ENCODE measurements at regions of chr4 and their contacts with region 1.

Region 1: GRCh38 chr4:54058171-54058570 is 6.2 kb downstream of the CHIC2 start:
- DNase-seq: no peak
- H3K4me3 Mint-ChIP-seq: peak overlapping the region; percentile 28
- H3K27ac Mint-ChIP-seq: peak overlapping the region; percentile 6
- H3K4me1 Mint-ChIP-seq: peaks cover 61% of the 10 kb centered on the region
- H3K27me3 Mint-ChIP-seq: no peaks in the 10 kb centered on the region

Region 2: DNA sequence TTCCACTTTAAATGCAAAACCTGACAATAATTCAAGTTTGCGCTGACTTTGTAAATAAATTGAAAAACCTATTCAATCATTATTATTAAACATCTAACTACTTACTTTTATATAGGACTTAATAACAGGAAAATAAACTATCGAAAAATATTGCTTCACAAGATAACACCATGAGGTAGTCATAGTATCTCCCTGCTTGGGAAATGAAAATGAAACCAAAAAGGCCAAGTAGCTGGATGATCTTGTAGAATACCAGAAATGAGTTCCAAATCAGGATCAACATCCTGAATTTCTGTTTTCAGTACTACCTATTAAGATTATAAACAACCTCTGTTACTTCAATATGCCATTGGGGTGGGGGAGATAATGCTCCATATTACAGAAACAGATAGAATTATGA is 52.7 kb before region 1 on chr4:
- intact Hi-C with region 1: loop called (anchors 5 kb)
- DNase-seq: no peak
- H3K4me3 Mint-ChIP-seq: no peak overlapping the region
- H3K27ac Mint-ChIP-seq: no peak overlapping the region
- H3K4me1 Mint-ChIP-seq: peaks cover 7% of the 10 kb centered on the region
- H3K27me3 Mint-ChIP-seq: no peaks in the 10 kb centered on the region

Region 3: DNA sequence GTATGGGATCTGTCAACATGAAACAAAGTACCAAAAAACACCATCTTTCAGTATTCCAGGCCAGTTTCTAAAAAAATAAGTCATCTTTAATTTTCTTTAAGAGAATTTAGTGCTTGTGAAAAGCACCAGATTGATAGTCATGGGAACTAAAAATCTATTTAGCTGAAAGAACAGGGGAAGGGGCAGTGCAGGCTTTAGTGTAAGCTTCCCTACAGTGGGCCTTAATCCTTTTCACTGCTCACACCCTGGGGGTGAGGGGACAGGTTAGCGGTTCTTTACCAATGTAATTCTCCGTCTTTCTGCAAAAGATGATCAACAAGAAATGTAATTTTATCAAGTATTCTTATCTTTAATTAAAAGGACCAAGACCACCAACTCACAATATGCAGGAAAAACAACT is 40.9 kb before region 1 on chr4:
- intact Hi-C with region 1: no loop called
- DNase-seq: no peak
- H3K4me3 Mint-ChIP-seq: no peak overlapping the region
- H3K27ac Mint-ChIP-seq: no peak overlapping the region
- H3K4me1 Mint-ChIP-seq: no peaks in the 10 kb centered on the region
- H3K27me3 Mint-ChIP-seq: no peaks in the 10 kb centered on the region

Measured in activated T-helper 2 cell treated with anti-CD3 and anti-CD28 coated beads, Interferon-gamma antibody, Interleukin-2, Interleukin-4, amounts not matched to agents 10 μg/mL and 5 μg/mL and 100 μg/mL, durations not matched to agents 14 hours and 24 hours and 36 hours (primary cell).